ENCODE measurements at regions of chr11 and their contacts with region 1.

Region 1: DNA sequence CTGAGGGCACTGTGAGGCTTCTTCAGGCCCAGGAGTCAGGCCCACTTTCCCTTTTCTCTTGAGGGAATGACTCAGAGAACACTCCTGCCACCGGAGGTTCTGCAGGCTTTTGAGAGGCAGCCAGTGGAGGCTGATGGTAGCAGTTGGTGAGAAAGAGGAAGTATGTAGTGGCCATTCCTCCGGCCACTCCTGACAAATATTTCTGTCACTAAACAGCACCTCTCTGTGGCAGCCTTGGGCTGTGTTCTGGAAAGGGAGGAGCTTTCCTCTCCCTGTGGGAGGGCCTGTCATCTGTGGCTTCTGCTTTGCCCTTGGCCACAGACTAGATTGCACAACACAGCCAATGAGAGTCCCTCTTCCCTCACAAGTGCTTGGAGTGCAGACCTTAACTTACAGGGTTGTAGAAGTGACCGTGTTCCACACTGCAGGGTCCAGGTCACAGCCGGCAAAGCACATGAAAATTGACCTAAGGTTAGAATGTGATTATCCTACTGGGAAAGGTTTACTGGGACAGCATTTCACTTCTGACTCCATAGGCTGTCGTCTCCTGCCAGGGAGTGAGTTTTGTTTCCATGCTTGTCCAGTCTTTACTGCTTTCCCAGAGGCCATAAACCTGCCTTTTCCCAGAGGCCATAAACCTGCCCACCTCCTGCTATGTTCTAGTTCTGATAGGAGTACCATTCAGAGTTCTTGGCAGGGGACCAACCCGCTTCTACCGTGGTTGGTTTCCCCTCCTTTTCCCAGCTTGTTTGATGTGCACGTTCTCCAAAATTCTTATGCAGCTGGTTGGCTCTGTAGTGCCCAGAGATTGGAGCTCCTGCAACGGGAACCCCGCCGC is 33.3 kb downstream of the MARK2 start:
- DNase-seq: peak; percentile 83
- H3K4me3 ChIP-seq: no peak overlapping the region
- H3K27ac ChIP-seq: peak overlapping the region; percentile 18
- H3K4me1 ChIP-seq: peaks cover 20% of the 10 kb centered on the region
- H3K27me3 ChIP-seq: no peaks in the 10 kb centered on the region
- CTCF ChIP-seq: peak; percentile 63

Region 2: DNA sequence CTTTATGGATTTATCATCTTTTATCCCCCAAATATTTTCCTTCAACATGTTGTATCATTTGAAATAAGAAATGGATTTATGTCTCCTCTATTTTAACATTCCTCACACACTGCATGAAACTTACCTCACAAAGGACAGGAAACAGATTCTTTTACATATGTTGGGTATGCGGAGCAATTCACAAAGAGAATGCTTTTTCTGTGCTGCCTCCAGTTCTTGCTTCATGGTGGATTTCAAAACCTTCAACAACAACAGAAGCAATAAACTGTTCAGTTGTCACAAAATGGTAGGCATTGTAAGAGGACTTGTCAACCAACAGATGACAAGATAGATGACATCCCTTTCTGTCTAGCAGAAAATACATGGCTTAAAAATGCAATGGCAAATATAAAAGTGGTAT is 691.6 kb before region 1 on chr11:
- CTCF ChIA-PET with region 1: no interaction called
- POLR2A ChIA-PET with region 1: no interaction called
- intact Hi-C with region 1: no loop called
- DNase-seq: peak; percentile 71
- H3K4me3 ChIP-seq: no peak overlapping the region
- H3K27ac ChIP-seq: peak overlapping the region; percentile 83
- H3K4me1 ChIP-seq: peaks cover 32% of the 10 kb centered on the region
- H3K27me3 ChIP-seq: no peaks in the 10 kb centered on the region
- CTCF ChIP-seq: no peak

Region 3: DNA sequence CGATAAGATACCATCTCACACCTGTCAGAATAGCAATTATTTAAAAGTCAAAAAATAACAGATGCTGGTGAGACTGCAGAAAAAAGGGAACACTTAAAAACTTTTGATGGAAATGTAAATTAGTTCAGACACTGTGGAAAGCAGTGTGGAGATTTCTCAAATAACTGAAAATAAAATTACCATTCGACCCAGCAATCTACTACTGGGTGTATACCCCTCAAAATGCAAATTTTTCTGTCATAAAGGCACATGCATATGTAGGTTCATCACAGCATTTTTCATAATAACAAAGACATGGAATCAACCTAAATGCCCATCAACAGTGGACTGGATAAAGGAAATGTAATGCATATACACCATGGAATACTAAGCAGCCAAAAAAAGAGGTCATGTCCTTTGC is 492.1 kb before region 1 on chr11:
- CTCF ChIA-PET with region 1: no interaction called
- POLR2A ChIA-PET with region 1: no interaction called
- intact Hi-C with region 1: no loop called
- DNase-seq: no peak
- H3K4me3 ChIP-seq: no peak overlapping the region
- H3K27ac ChIP-seq: no peak overlapping the region
- H3K4me1 ChIP-seq: no peaks in the 10 kb centered on the region
- H3K27me3 ChIP-seq: no peaks in the 10 kb centered on the region
- CTCF ChIP-seq: no peak

Region 4: DNA sequence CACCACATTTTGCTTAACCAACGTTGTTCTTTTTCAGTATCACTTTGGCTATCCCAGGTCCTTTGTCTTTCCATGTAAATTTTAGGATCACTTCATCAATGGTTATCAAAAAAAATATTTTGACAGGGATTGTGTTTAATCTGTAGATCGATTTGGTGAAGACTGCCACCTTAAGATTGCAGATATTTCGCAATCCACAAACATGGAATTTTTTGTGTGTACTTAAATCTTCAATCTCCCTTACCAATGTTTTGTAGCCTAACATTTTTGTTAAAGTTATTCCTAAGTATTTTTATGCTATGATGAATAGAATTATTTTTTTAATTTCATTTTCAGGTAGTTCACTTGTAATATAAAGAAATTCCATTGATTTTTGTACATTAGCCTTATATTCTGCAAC is 399.8 kb before region 1 on chr11:
- CTCF ChIA-PET with region 1: no interaction called
- POLR2A ChIA-PET with region 1: no interaction called
- intact Hi-C with region 1: no loop called
- DNase-seq: no peak
- H3K4me3 ChIP-seq: no peak overlapping the region
- H3K27ac ChIP-seq: no peak overlapping the region
- H3K4me1 ChIP-seq: no peaks in the 10 kb centered on the region
- H3K27me3 ChIP-seq: no peaks in the 10 kb centered on the region
- CTCF ChIP-seq: no peak

Region 5: GRCh38 chr11:63847363-63847762 is 24.8 kb before region 1 on chr11:
- CTCF ChIA-PET with region 1: no interaction called
- POLR2A ChIA-PET with region 1: interaction called, 15 read pairs
- intact Hi-C with region 1: no loop called
- DNase-seq: no peak
- H3K4me3 ChIP-seq: no peak overlapping the region
- H3K27ac ChIP-seq: peak overlapping the region; percentile 22
- H3K4me1 ChIP-seq: peaks cover 18% of the 10 kb centered on the region
- H3K27me3 ChIP-seq: no peaks in the 10 kb centered on the region
- CTCF ChIP-seq: no peak

Region 6: DNA sequence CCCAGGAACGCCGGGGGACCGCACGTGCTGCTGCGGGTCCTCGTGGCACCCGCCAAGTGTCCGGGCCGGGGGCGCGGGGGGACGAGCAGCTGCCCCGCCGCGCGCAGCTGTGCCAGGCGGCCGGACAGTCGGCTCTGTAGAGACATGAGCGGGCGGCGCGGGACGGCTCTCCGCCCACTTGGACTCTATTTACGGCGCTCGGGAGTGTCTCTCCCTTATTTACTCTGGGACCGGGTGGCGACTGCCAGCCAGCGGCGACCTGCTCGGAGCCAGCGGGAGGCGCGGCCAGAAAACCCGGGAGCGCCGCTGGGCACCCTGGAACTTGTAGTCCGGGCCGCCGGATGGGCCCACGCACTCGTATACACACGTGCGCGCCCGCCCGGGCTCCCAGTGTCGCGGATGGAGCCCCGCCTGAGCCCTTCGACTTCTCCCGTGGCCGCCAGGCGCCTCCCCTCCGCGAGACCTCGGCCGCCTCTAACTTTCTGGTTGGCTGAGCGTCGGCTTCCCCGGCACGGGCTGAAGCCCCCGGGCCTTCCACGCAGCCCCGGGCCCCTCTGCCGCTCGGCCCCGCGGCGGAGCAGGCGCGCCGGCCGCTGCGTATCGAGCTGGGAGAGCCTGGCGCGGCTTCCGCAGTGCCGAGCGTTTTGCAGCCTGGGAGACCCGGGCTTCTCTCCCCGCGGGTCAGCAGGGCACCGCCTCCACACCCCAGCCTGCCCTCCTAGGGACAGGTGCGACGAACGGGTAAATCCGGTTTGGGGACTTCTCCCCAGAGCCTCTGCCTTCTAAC is 293.9 kb after region 1 on chr11 and contains the start of gene MACROD1:
- CTCF ChIA-PET with region 1: no interaction called
- POLR2A ChIA-PET with region 1: no interaction called
- intact Hi-C with region 1: no loop called
- DNase-seq: peak; percentile 97
- H3K4me3 ChIP-seq: peak within 1 kb of the TSS; percentile 94
- H3K27ac ChIP-seq: peak within 1 kb of the TSS; percentile 89
- H3K4me1 ChIP-seq: peaks cover 8% of the 10 kb centered on the region
- H3K27me3 ChIP-seq: no peaks in the 10 kb centered on the region
- CTCF ChIP-seq: no peak
- total RNA-seq, gene MACROD1: 28.7 and 32.6 TPM in 2 replicates